Calu3 (cell line): ENCODE measurements at regions of chr3 and their contacts with region 1.

Region 1: GRCh38 chr3:9536212-9536611 is 17.4 kb downstream of the LHFPL4 start:
- DNase-seq: no peak
- H3K4me3 Mint-ChIP-seq: no peak overlapping the region
- H3K27ac Mint-ChIP-seq: no peak overlapping the region
- H3K4me1 Mint-ChIP-seq: no peaks in the 10 kb centered on the region
- H3K27me3 Mint-ChIP-seq: peaks cover 18% of the 10 kb centered on the region
- CTCF ChIP-seq: no peak

Region 2: GRCh38 chr3:9600597-9600996 is 64.4 kb after region 1 on chr3:
- CTCF ChIA-PET with region 1: no interaction called
- intact Hi-C with region 1: loop called (anchors 10 kb)
- DNase-seq: peak; percentile 62
- H3K4me3 Mint-ChIP-seq: peak overlapping the region; percentile 52
- H3K27ac Mint-ChIP-seq: no peak overlapping the region
- H3K4me1 Mint-ChIP-seq: peaks cover 12% of the 10 kb centered on the region
- H3K27me3 Mint-ChIP-seq: no peaks in the 10 kb centered on the region
- CTCF ChIP-seq: no peak